Breast epithelium (tissue), 4 donors: ENCODE measurements at regions of chr14 and their contacts with region 1.

Region 1: GRCh38 chr14:23984891-23985602 is 3.7 kb upstream of the DHRS4L2 start:
- DNase-seq: no peak
- H3K4me3 ChIP-seq: no peak overlapping the region
- H3K27ac ChIP-seq: peak overlapping the region in 1 of 2 donors; percentile 70
- H3K4me1 ChIP-seq: no peaks in the 10 kb centered on the region
- H3K27me3 ChIP-seq: no peaks in the 10 kb centered on the region
- CTCF ChIP-seq: no peak
- POLR2A ChIP-seq: no peak

Region 2: DNA sequence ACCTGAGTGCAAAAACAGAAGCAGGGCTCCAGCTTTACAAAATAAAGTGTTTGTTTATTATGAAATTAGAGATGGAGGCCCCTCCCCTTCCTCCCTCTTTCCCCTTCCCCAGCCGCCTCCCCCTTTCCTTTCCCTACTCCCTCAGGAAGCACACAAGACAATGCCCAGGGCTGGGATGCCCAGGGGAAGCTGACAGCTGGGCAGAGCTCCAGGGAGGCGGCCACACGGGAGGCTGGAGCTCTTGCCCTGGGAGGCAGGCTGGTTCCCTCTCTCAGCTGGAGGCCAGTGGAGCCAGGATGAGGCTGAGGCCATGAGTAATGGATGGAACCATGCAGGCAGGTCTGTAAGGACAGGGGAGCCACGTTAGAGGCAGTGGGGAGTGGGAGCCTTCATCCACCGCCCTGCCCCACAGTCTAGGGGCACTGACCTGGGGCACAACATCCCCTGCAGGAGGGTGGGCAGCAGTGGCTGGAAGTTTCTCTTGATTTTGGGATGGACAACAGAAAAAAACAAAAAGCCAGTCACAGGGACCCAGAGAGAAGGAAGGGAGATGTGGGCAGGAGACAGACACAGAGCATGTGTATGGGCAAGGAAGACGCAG is 937.9 kb before region 1 on chr14:
- intact Hi-C with region 1: no loop called
- DNase-seq: no peak
- H3K4me3 ChIP-seq: no peak overlapping the region
- H3K27ac ChIP-seq: no peak overlapping the region
- H3K4me1 ChIP-seq: no peaks in the 10 kb centered on the region
- H3K27me3 ChIP-seq: no peaks in the 10 kb centered on the region
- CTCF ChIP-seq: no peak
- POLR2A ChIP-seq: no peak

Region 3: GRCh38 chr14:24036169-24036962 is 51.3 kb after region 1 on chr14:
- intact Hi-C with region 1: loop called (anchors 10 kb)
- DNase-seq: peak; percentile 78 to 81
- H3K4me3 ChIP-seq: peak overlapping the region; percentile 51 to 71 (median 57)
- H3K27ac ChIP-seq: peak overlapping the region; percentile 90 to 96
- H3K4me1 ChIP-seq: no peaks in the 10 kb centered on the region
- H3K27me3 ChIP-seq: no peaks in the 10 kb centered on the region
- CTCF ChIP-seq: peak; percentile 63 to 76 (median 74)
- POLR2A ChIP-seq: no peak

Region 4: GRCh38 chr14:24843494-24843893 is 858.4 kb after region 1 on chr14:
- intact Hi-C with region 1: no loop called
- DNase-seq: no peak
- H3K4me3 ChIP-seq: no peak overlapping the region
- H3K27ac ChIP-seq: no peak overlapping the region
- H3K4me1 ChIP-seq: no peaks in the 10 kb centered on the region
- H3K27me3 ChIP-seq: no peaks in the 10 kb centered on the region
- CTCF ChIP-seq: no peak
- POLR2A ChIP-seq: no peak